ENCODE measurements at regions of chr2 and their contacts with region 1.

Region 1: GRCh38 chr2:12116228-12116750 is 369.9 kb downstream of the LPIN1 start:
- DNase-seq: no peak
- H3K4me3 ChIP-seq: no peak overlapping the region
- H3K27me3 ChIP-seq: peaks cover 3% of the 10 kb centered on the region
- CTCF ChIP-seq: no peak

Region 2: DNA sequence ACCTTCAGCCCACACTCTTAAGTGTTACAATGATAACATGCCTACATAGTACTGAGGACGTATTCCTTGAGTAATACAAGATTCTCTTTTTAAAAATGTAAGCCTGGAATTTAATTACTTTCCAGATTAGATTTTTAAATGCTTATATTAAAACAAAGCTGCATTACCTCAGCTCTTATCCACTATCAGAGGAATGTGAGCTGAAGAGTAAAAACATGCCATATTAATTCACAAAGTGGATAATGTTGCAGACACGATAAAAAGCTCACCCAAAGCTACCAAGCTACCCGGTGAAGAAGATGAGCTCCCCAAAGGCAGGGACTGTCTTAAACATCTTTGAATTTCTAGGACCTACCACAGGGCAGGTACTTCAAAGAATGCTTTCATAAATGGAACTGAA is 1534.3 kb before region 1 on chr2:
- CTCF ChIA-PET with region 1: no interaction called
- POLR2A ChIA-PET with region 1: interaction called, 15 read pairs
- DNase-seq: no peak
- H3K4me3 ChIP-seq: no peak overlapping the region
- H3K27me3 ChIP-seq: no peaks in the 10 kb centered on the region
- CTCF ChIP-seq: no peak

Region 3: GRCh38 chr2:12087671-12088381 is 28.5 kb before region 1 on chr2:
- CTCF ChIA-PET with region 1: no interaction called
- POLR2A ChIA-PET with region 1: interaction called, 10 read pairs
- DNase-seq: no peak
- H3K4me3 ChIP-seq: no peak overlapping the region
- H3K27me3 ChIP-seq: no peaks in the 10 kb centered on the region
- CTCF ChIP-seq: no peak

Region 4: GRCh38 chr2:12099374-12099773 is 16.9 kb before region 1 on chr2:
- CTCF ChIA-PET with region 1: no interaction called
- POLR2A ChIA-PET with region 1: no interaction called
- DNase-seq: no peak
- H3K4me3 ChIP-seq: no peak overlapping the region
- H3K27me3 ChIP-seq: no peaks in the 10 kb centered on the region
- CTCF ChIP-seq: no peak

Region 5: GRCh38 chr2:12416600-12416999 is 300.3 kb after region 1 on chr2:
- CTCF ChIA-PET with region 1: no interaction called
- POLR2A ChIA-PET with region 1: no interaction called
- DNase-seq: no peak
- H3K4me3 ChIP-seq: no peak overlapping the region
- H3K27me3 ChIP-seq: no peaks in the 10 kb centered on the region
- CTCF ChIP-seq: peak; percentile 59